ENCODE measurements at regions of chr7 and their contacts with region 1.

Region 1: DNA sequence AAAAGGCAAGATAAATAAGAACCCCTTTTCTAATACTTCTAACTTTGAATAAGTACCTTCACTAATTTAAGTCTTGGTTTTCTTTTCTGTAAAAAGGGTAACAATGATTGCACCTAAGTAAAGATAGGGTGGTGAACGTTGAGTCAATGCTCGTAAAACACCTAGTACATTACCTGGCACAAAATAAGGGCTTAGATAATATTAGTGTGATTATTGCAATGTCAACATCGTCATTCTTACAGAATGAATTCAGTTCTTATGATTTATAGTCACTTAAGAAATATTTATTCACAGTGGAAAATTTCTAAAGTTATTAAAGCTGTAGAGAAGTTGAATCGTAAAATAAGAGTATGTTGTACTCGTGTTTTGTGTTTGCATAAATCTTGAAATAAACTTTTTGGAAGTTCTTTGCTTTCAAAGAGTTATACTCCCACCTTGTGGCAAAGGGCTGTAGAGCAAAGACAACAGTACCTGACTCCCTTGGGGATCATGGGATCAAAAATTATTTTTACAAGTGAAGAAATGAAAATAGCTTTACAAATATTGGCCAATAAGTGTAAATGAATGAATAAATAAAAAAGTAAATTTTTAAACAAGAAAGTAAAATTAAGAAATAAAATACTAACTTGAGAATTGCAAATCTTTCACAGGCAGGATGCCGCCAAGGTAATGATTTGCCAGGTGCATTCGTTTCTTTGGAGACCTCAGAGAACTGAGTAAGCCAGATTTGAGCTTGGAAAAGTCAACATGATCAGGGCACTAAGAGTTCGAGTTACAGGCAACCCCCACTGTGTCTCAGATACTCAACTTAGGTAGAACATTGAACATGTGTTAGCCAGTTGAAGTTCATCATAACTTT is 285.8 kb upstream of the CACNA2D1 start:
- DNase-seq: peak; percentile 48
- ATAC-seq: peak; percentile 72; the same call in 1 of the 2 replicates
- H3K4me3 ChIP-seq: no peak overlapping the region; a peak in 1 of 4 replicates
- H3K27ac ChIP-seq: no peak overlapping the region
- H3K4me1 ChIP-seq: no peaks in the 10 kb centered on the region
- H3K27me3 ChIP-seq: no peaks in the 10 kb centered on the region
- CTCF ChIP-seq: peak; percentile 73 to 87 (median 78)
- POLR2A ChIP-seq: no peak
- RAD21 ChIP-seq: peak; percentile 86

Region 2: DNA sequence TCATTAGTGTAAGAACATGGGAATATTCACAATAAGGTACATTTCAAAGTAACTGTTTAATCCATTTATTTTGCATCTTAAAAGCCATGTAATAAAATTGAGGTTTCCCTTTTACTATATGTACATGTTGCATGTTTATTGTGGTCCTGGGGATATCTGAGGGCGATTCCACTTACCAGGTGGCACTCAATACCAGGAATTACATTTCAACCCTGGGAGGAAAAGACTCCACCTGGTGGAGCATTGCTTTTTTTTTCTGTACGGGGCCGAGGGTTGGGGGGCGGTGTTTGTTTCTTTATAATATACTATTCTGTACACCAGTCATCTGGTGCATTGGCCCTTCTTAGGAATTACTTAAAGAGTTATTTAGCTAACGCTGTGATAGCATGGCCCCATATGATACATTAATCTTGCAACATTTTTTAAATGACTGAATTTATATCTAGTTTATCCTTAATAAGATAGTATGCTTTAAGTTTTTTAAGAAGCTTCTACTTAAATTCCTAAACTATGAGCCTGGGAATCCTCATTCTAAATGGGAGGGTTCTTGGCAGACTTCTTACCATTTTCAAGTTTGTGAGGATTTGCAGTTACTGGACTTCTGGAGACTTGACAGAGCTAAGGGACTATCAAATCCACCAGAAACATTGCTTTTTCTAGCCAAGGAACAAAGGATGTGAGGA is 952.3 kb before region 1 on chr7:
- CTCF ChIA-PET with region 1: no interaction called
- POLR2A ChIA-PET with region 1: no interaction called
- RAD21 ChIA-PET with region 1: no interaction called
- intact Hi-C with region 1: loop called (anchors 5 kb)
- DNase-seq: peak; percentile 8
- ATAC-seq: peak; percentile 90
- H3K4me3 ChIP-seq: no peak overlapping the region
- H3K27ac ChIP-seq: no peak overlapping the region
- H3K4me1 ChIP-seq: no peaks in the 10 kb centered on the region
- H3K27me3 ChIP-seq: no peaks in the 10 kb centered on the region
- CTCF ChIP-seq: peak; percentile 61 to 83 (median 64)
- POLR2A ChIP-seq: no peak
- RAD21 ChIP-seq: peak; percentile 54

Region 3: DNA sequence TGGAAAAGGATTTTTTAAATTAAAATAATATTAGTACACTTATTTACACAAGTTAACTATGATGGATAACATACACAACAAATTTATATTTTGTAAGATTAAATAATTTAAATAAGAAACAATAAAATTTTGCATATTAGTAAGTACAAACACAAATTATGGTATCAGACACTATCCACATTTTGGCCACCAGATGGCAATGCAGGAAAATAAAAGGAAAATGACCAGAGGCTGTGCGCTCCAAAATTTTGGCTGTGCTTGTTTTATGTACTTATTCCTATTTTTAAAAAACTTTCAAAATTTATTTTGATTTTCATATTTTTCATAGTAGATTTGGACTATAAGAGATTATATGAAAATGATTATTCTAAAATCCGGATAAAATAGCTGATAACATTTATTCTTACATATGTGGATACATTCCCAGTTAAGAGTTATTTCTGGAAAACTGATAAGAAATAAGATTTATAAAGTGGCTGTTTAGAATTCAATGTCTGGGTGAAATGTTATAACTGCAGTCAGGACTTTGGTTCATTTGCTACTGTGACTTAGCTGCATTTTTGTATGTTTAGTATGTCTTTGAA is 684.8 kb before region 1 on chr7:
- CTCF ChIA-PET with region 1: interaction called, 9 read pairs
- POLR2A ChIA-PET with region 1: no interaction called
- RAD21 ChIA-PET with region 1: no interaction called
- intact Hi-C with region 1: loop called (anchors 1 kb)
- DNase-seq: peak; percentile 23
- ATAC-seq: no peak
- H3K4me3 ChIP-seq: no peak overlapping the region
- H3K27ac ChIP-seq: no peak overlapping the region
- H3K4me1 ChIP-seq: peaks cover 5% of the 10 kb centered on the region in 2 experiments; a peak in 3 of 4 replicates
- H3K27me3 ChIP-seq: no peaks in the 10 kb centered on the region
- CTCF ChIP-seq: peak; percentile 49 to 66 (median 50)
- POLR2A ChIP-seq: no peak
- RAD21 ChIP-seq: peak; percentile 85

Region 4: GRCh38 chr7:82234457-82235049 is 494.8 kb before region 1 on chr7:
- CTCF ChIA-PET with region 1: interaction called, 6 read pairs
- POLR2A ChIA-PET with region 1: no interaction called
- RAD21 ChIA-PET with region 1: no interaction called
- intact Hi-C with region 1: loop called (anchors 5 kb)
- DNase-seq: peak; percentile 31
- ATAC-seq: 0 out of 2 replicates have a peak, but pooled peaks have one; percentile 38
- H3K4me3 ChIP-seq: no peak overlapping the region
- H3K27ac ChIP-seq: no peak overlapping the region
- H3K4me1 ChIP-seq: no peaks in the 10 kb centered on the region
- H3K27me3 ChIP-seq: no peaks in the 10 kb centered on the region
- CTCF ChIP-seq: peak; percentile 47 to 74 (median 63); a peak in 5 of 6 replicates
- POLR2A ChIP-seq: no peak
- RAD21 ChIP-seq: peak; percentile 70

Region 5: GRCh38 chr7:82507975-82508677 is 221.3 kb before region 1 on chr7:
- CTCF ChIA-PET with region 1: no interaction called
- POLR2A ChIA-PET with region 1: no interaction called
- RAD21 ChIA-PET with region 1: no interaction called
- intact Hi-C with region 1: no loop called
- DNase-seq: no peak
- ATAC-seq: no peak
- H3K4me3 ChIP-seq: no peak overlapping the region
- H3K27ac ChIP-seq: no peak overlapping the region
- H3K4me1 ChIP-seq: no peaks in the 10 kb centered on the region
- H3K27me3 ChIP-seq: no peaks in the 10 kb centered on the region
- CTCF ChIP-seq: no peak
- POLR2A ChIP-seq: no peak
- RAD21 ChIP-seq: no peak

Region 6: GRCh38 chr7:82572195-82572880 is 157.1 kb before region 1 on chr7:
- CTCF ChIA-PET with region 1: no interaction called
- POLR2A ChIA-PET with region 1: no interaction called
- RAD21 ChIA-PET with region 1: interaction called in 1 of 2 experiments, 3 read pairs
- intact Hi-C with region 1: loop called (anchors 2 kb)
- DNase-seq: peak; percentile 76
- ATAC-seq: peak; percentile 97
- H3K4me3 ChIP-seq: no peak overlapping the region
- H3K27ac ChIP-seq: no peak overlapping the region
- H3K4me1 ChIP-seq: peaks cover 0 to 8% of the 10 kb centered on the region in 2 experiments; a peak in 1 of 4 replicates
- H3K27me3 ChIP-seq: no peaks in the 10 kb centered on the region
- CTCF ChIP-seq: peak; percentile 79 to 92 (median 90)
- POLR2A ChIP-seq: no peak
- RAD21 ChIP-seq: peak; percentile 90